HEK293 (cell line): ENCODE measurements at regions of chr10 and their contacts with region 1.

Region 1: DNA sequence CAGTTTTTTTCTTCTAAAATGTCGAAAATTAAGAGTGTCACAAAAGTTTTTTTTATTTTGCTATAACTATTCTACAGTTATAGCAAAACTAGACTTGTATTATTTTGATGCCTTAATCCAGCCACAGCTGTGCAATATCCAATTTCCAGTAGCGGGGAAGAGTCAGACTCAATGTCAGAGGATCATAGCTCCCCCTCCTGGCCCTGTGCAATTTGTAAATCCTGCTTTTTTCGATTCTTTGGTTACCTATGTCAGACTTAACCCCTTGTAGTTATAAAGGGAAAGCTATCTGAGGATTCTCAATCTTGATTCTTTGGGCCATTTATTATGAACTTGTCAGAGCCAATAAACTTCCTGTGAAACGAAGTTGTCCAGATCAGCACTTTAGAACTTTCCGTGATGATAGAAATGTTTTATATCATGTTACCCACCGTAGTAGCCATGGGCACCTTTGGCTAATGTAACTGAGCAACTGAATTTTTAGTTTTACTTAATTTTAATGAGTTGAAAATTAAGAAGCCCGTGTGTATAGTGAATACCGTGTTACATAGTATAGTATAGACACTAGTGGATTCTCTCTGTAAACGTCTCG is 87.7 kb upstream of the PRKCQ start:
- H3K4me3 ChIP-seq: no peak overlapping the region
- H3K27ac ChIP-seq: no peak overlapping the region
- H3K4me1 ChIP-seq: no peaks in the 10 kb centered on the region
- CTCF ChIP-seq: peak; percentile 36; the same call in 1 of the 2 replicates

Region 2: DNA sequence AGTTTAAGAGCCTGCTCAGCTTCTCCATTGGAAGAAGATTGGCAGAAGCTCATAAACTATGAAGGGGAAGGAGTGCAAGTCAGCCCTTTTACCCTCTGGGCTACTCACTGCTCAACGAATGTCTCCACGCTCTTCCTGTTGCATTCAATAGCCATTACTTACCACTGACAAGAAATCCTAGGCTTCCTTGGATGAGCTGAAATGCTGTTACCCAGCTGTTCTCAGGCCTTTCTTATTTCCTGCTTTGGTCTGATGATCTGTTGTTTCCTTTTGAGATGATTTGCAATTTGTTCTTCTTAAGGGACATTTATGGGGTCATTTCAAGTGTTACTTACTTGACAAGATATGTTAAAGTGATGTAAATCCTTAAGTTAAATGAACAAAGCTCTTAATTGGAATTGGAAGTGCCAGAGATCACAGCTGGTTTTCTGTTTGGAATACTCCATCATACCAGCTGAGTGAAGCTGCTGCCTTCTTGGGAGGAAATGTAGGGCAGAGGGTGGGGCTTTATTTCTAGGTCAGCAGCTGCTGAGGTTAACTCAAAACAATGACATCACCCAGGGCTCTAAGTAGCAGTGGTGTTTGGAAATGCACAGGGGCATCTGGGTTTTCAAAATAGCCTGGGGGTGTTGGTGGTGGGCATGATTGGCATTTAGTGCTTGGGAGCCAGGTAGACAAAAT is 257.7 kb before region 1 on chr10:
- CTCF ChIA-PET with region 1: interaction called, 26 read pairs
- POLR2A ChIA-PET with region 1: no interaction called
- H3K4me3 ChIP-seq: no peak overlapping the region
- H3K27ac ChIP-seq: no peak overlapping the region
- H3K4me1 ChIP-seq: no peaks in the 10 kb centered on the region
- CTCF ChIP-seq: no peak

Region 3: GRCh38 chr10:6416892-6417512 is 250.8 kb before region 1 on chr10:
- CTCF ChIA-PET with region 1: interaction called, 26 read pairs
- POLR2A ChIA-PET with region 1: no interaction called
- H3K4me3 ChIP-seq: no peak overlapping the region
- H3K27ac ChIP-seq: no peak overlapping the region
- H3K4me1 ChIP-seq: no peaks in the 10 kb centered on the region
- CTCF ChIP-seq: peak; percentile 60

Region 4: GRCh38 chr10:6678211-6678803 is 10.5 kb after region 1 on chr10:
- CTCF ChIA-PET with region 1: interaction called, 16 read pairs
- POLR2A ChIA-PET with region 1: no interaction called
- H3K4me3 ChIP-seq: no peak overlapping the region
- H3K27ac ChIP-seq: no peak overlapping the region
- H3K4me1 ChIP-seq: no peaks in the 10 kb centered on the region
- CTCF ChIP-seq: no peak

Region 5: GRCh38 chr10:7417103-7417623 is 749.4 kb after region 1 on chr10:
- CTCF ChIA-PET with region 1: interaction called, 18 read pairs
- POLR2A ChIA-PET with region 1: no interaction called
- H3K4me3 ChIP-seq: no peak overlapping the region
- H3K27ac ChIP-seq: no peak overlapping the region
- H3K4me1 ChIP-seq: no peaks in the 10 kb centered on the region; the same call in 1 of the 2 replicates
- CTCF ChIP-seq: no peak